Panc1 (cell line): ENCODE measurements at regions of chr13 and their contacts with region 1.

Region 1: DNA sequence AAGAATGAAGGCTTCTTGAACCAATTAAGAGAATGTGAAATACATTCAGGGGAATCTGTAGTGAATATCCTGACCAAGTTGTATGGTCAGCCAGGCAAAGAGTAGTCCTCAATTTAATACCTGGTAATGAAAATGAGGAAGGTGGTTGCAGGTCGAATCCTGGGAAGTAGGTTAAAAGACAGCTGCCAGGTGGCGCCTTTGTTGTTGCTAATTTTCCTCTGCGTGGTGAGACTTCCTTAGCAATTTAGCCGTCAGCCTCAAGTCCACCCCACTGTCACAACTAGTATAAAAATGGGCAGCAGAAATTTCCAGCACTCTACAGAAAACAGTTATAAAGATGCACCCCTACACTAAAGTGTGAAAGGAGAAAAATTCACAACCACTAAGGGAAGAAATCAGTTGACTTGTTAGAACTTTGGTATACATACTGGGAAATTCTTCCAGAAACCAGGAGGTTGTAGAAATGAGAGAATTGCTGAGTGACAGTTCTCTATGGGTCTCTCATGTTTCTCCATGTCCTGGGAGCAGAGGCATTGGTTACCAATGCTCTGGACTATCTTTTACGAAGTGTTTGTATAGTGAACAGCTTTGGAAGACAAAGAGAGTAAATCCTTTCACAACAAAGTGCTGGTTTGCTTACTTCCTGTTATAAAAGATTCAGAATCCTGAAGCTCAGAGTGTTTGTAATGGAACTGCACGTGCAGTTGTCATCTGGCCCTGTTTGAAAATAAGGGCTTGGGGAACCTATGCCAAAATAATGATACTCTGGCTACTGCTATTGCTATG is 235.9 kb downstream of the NHLRC3 start:
- DNase-seq: no peak
- ATAC-seq: no peak
- H3K4me3 ChIP-seq: no peak overlapping the region
- H3K27ac ChIP-seq: no peak overlapping the region
- H3K4me1 ChIP-seq: no peaks in the 10 kb centered on the region
- H3K27me3 ChIP-seq: no peaks in the 10 kb centered on the region
- CTCF ChIP-seq: peak; percentile 44

Region 2: GRCh38 chr13:39016787-39017186 is 257.4 kb before region 1 on chr13:
- CTCF ChIA-PET with region 1: interaction called, 16 read pairs
- POLR2A ChIA-PET with region 1: no interaction called
- in situ Hi-C with region 1: no loop called
- intact Hi-C with region 1: no loop called
- DNase-seq: no peak
- ATAC-seq: no peak
- H3K4me3 ChIP-seq: no peak overlapping the region
- H3K27ac ChIP-seq: no peak overlapping the region
- H3K4me1 ChIP-seq: no peaks in the 10 kb centered on the region
- H3K27me3 ChIP-seq: no peaks in the 10 kb centered on the region
- CTCF ChIP-seq: peak; percentile 60

Region 3: GRCh38 chr13:39144941-39145533 is 129.1 kb before region 1 on chr13:
- CTCF ChIA-PET with region 1: no interaction called
- POLR2A ChIA-PET with region 1: no interaction called
- in situ Hi-C with region 1: no loop called
- intact Hi-C with region 1: no loop called
- DNase-seq: peak; percentile 24
- ATAC-seq: no peak
- H3K4me3 ChIP-seq: no peak overlapping the region
- H3K27ac ChIP-seq: no peak overlapping the region
- H3K4me1 ChIP-seq: no peaks in the 10 kb centered on the region; the same call in 1 of the 2 replicates
- H3K27me3 ChIP-seq: no peaks in the 10 kb centered on the region; the same call in none of the 2 replicates
- CTCF ChIP-seq: peak; percentile 74